ENCODE measurements at regions of chr6 and their contacts with region 1.

Region 1: GRCh38 chr6:107704347-107705013 is 119.6 kb downstream of the SCML4 start:
- DNase-seq: peak in 1 of 10 donors; percentile 21
- H3K4me3 ChIP-seq: peak overlapping the region in 48 of 59 donors; percentile 3 to 59 (median 38)
- H3K27ac ChIP-seq: no peak overlapping the region
- H3K27me3 ChIP-seq: no peaks in the 10 kb centered on the region
- CTCF ChIP-seq: peak; percentile 68 to 95 (median 86)

Region 2: GRCh38 chr6:107064579-107065065 is 639.9 kb before region 1 on chr6:
- intact Hi-C with region 1: no loop called
- DNase-seq: no peak
- H3K4me3 ChIP-seq: no peak overlapping the region
- H3K27ac ChIP-seq: no peak overlapping the region
- H3K27me3 ChIP-seq: no peaks in the 10 kb centered on the region
- CTCF ChIP-seq: no peak

Region 3: DNA sequence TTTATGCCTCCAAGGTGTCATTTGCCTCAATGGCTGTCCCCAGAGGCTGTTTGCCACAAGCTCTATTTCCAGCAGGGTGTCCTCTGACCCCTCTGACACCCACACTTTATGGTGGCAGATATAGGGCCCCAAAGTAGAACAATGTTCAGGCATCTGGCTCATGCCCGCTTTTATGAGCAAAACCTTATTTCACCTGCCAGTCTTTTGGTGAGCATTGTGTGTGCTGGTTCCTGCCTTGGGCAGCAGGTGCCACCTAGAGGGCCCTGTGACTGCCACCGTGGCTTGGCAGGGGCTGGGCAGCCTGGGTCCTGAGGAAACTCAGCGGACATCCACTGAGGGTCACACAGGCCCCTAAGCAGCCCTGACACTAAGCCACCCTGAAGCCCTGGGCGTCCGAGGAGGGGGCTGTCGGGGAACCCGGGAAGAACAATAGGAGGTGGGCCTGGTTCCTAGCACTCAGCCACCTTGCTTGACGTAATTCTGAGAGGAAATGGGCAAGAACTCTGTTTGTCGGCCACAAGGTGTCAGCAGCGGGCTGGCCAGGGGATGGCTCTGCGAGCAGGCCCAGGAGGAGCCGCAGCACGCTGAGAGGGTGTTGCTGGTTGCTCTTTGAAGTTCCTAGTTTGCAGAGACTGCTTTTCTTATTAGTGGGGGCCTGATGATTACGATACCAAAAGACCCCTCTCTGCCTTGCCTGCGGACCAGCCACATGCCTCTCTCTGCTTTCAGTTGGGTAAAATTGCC is 29.3 kb before region 1 on chr6:
- intact Hi-C with region 1: loop called in 1 of 2 experiments (anchors 2 kb)
- DNase-seq: peak; percentile 64 to 88 (median 83)
- H3K4me3 ChIP-seq: peak overlapping the region in 28 of 59 donors; percentile 1 to 42 (median 28)
- H3K27ac ChIP-seq: peak overlapping the region in 4 of 59 donors; percentile 50 to 73 (median 56)
- H3K27me3 ChIP-seq: no peaks in the 10 kb centered on the region
- CTCF ChIP-seq: peak; percentile 72 to 96 (median 89)